ENCODE measurements at regions of chr22 and their contacts with region 1.

Region 1: GRCh38 chr22:29302681-29303465 is 3.6 kb upstream of the GAS2L1 start:
- DNase-seq: no peak
- ATAC-seq: no peak
- H3K4me3 Mint-ChIP-seq: no peak overlapping the region
- H3K27ac Mint-ChIP-seq: no peak overlapping the region
- H3K4me1 Mint-ChIP-seq: peaks cover 15% of the 10 kb centered on the region
- H3K27me3 Mint-ChIP-seq: peaks cover 23% of the 10 kb centered on the region
- CTCF ChIP-seq: no peak

Region 2: DNA sequence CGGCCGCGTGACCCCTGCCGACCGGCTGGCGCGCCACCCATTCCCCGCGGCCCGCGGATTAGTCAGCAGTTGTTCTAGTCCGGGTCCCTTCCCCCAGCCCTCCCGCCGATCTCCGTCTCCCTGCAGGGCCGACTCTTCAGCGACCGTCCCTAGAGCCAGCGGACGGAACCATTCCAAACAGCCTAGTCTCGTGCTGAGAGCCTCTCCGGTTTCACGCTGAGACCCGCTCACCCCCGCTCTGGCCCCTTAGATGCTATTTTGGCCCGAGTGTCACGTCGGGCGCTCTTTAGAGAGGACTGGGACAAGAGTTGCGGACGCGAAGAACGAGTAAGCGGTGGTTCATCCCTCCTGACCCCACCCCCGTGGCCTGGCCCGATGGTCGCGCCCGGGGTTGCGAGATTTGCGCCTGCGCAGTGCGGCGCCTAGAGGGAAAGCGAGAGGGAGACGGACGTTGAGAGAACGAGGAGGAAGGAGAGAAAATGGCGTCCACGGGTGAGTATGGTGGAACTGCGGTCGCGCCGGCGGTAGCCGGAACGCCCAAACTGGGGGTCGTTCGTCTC is 34.9 kb before region 1 on chr22 and contains the starts of genes EWSR1 and RHBDD3:
- CTCF ChIA-PET with region 1: interaction called, 5 read pairs
- POLR2A ChIA-PET with region 1: interaction called, 29 read pairs
- intact Hi-C with region 1: no loop called
- DNase-seq: peak; percentile 95
- ATAC-seq: peak; percentile 88
- H3K4me3 Mint-ChIP-seq: peak within 1 kb of the TSS; percentile 85
- H3K27ac Mint-ChIP-seq: peak within 1 kb of the TSS; percentile 97
- H3K4me1 Mint-ChIP-seq: peaks cover 39% of the 10 kb centered on the region
- H3K27me3 Mint-ChIP-seq: no peaks in the 10 kb centered on the region
- CTCF ChIP-seq: no peak
- total RNA-seq, gene EWSR1: 307 to 315 TPM
- total RNA-seq, gene RHBDD3: 24.5 to 25.4 TPM

Region 3: DNA sequence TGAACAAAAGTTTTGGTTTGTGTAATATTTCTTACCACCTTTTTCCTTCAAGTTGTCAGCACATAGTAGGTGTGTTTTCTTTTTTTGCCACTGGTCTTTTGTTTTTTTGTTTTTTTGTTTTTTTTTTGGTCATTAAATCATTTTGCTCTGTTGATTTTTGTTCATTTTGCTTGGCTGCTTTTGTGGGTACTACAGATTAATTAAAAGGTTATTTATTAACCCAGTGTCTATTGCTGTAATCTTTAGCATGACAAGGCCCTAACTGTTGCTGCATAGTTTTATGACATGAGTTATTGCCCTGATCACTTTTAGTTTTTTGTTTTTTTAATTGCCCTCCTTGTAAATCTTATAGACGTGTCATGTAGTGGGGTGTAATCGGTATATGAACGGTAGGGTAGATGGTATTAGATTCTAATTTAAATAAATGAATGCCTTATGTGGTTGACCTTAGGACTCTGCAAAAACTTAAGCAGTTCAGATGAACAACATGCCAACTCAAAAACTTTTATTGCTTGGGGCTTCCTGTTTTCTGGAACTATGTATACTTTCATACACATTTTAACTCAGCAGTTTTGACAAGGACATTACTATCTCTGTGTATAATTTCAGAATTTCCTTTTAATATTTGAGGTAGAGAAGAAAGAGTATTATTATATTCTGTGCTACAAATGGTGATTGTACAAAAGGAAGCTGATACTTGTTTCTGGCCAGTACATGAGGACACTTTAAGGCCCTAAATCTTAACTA is 26.9 kb before region 1 on chr22:
- CTCF ChIA-PET with region 1: interaction called, 5 read pairs
- POLR2A ChIA-PET with region 1: interaction called, 29 read pairs
- intact Hi-C with region 1: no loop called
- DNase-seq: no peak
- ATAC-seq: no peak
- H3K4me3 Mint-ChIP-seq: no peak overlapping the region
- H3K27ac Mint-ChIP-seq: peak overlapping the region; percentile 67
- H3K4me1 Mint-ChIP-seq: peaks cover 68% of the 10 kb centered on the region
- H3K27me3 Mint-ChIP-seq: no peaks in the 10 kb centered on the region
- CTCF ChIP-seq: no peak

Region 4: DNA sequence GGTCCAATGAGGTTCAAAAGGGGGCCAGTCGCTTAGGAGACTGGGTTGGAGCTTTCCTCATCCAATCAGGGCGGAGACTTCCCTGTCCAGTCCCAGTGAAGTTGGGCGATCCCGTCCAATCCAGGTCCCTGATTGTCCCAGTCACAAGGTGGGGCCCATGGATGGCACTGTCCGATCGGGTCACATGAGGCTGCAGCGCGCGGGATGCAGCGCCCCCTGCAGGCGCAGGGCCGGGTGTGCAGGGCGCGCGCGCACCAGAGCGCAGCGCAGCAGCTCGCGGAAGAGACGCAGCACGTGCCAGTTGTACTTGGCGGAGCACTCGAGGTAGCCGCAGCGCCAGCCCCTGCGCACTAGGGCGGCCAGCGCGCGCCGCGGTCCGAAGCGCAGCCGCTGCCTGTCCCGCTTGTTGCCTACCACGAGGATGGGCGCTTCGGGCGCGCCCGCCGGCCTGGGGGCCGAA is 10.3 kb after region 1 on chr22:
- CTCF ChIA-PET with region 1: interaction called, 25 read pairs
- POLR2A ChIA-PET with region 1: interaction called, 4 read pairs
- intact Hi-C with region 1: no loop called
- DNase-seq: peak; percentile 47
- ATAC-seq: peak; percentile 37
- H3K4me3 Mint-ChIP-seq: no peak overlapping the region
- H3K27ac Mint-ChIP-seq: no peak overlapping the region
- H3K4me1 Mint-ChIP-seq: peaks cover 41% of the 10 kb centered on the region
- H3K27me3 Mint-ChIP-seq: peaks cover 43% of the 10 kb centered on the region
- CTCF ChIP-seq: peak; percentile 94

Region 5: GRCh38 chr22:29330753-29331152 is 27.9 kb after region 1 on chr22:
- CTCF ChIA-PET with region 1: no interaction called
- POLR2A ChIA-PET with region 1: no interaction called
- intact Hi-C with region 1: no loop called
- DNase-seq: no peak
- ATAC-seq: no peak
- H3K4me3 Mint-ChIP-seq: no peak overlapping the region
- H3K27ac Mint-ChIP-seq: no peak overlapping the region
- H3K4me1 Mint-ChIP-seq: no peaks in the 10 kb centered on the region
- H3K27me3 Mint-ChIP-seq: no peaks in the 10 kb centered on the region
- CTCF ChIP-seq: no peak